BJ (cell line): ENCODE measurements at regions of chr11 and their contacts with region 1.

Region 1: DNA sequence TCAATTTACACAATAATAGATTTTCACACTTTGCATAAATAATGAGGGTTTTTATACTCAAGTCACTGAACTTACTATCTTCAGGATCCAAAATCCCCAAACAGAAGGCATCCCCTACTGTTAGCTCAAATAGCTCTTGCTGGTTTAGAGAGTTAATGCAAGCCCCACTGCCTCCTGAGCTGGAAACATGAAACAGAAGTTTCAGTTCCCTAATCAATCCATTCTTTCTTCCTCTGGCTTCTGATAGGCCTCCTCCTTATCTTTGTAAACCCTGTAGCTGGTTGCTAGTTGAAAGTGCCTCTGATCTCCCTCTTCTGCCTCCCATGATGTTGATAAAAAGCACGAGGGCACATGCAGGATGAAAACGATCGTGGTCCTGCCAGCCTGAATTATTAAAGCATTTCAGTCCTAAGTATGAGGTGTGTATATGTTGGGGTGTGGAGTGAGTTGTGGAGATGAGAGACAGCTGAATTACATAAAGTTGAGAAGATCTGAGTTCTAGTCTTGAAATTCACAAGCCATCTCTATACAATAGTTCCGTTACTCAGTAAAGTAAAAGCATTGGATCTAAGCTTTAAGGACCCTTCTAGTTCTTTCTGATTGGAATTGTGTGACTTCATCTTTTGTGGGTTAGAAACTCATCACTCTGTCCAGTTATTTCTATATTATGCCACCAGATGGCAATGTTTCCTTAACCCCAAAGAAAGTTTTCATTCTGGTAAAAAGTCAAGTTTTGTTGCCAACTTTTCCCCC is 35.0 kb upstream of the EHF start:
- DNase-seq: no peak
- H3K4me3 ChIP-seq: no peak overlapping the region
- H3K27me3 ChIP-seq: peaks cover 3% of the 10 kb centered on the region
- CTCF ChIP-seq: peak; percentile 56

Region 2: GRCh38 chr11:34552270-34552669 is 33.6 kb before region 1 on chr11:
- CTCF ChIA-PET with region 1: no interaction called
- POLR2A ChIA-PET with region 1: no interaction called
- DNase-seq: no peak
- H3K4me3 ChIP-seq: no peak overlapping the region
- H3K27me3 ChIP-seq: peaks cover 10% of the 10 kb centered on the region
- CTCF ChIP-seq: no peak

Region 3: DNA sequence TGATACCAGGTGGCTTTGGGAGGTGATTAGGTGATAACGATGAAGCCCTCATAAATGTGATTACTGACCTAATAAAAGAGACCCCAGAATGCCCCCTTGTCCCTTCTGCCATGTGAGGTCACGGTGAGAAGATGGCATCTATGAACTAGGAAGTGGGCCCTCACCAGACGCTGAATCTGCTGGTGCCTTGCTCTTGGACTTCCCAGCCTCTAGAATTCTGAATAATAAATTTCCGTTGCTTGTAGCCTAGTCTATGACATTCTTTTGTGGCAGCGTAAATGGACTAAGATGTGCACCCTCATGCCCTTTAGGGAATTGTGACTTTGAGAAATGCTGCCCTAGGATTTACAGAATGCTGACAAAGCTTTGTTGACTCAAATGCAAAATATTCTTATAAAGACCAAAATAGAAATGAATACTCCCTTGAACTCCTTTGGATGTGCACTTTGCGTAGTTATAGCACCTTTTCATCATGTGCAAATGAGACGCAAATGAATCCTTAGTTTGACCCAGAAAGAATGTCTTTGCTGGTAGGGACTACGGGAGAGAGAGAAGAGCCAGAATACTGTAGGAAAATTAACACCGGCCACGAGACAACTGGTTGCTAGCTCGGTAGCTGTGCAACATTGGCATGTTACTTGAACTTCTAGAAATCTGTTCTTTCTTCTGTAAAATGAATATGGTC is 10.2 kb after region 1 on chr11:
- CTCF ChIA-PET with region 1: interaction called, 14 read pairs
- POLR2A ChIA-PET with region 1: no interaction called
- DNase-seq: no peak
- H3K4me3 ChIP-seq: no peak overlapping the region
- H3K27me3 ChIP-seq: no peaks in the 10 kb centered on the region
- CTCF ChIP-seq: no peak

Region 4: GRCh38 chr11:34653826-34654490 is 68.0 kb after region 1 on chr11:
- CTCF ChIA-PET with region 1: interaction called, 16 read pairs
- POLR2A ChIA-PET with region 1: no interaction called
- DNase-seq: peak; percentile 92
- H3K4me3 ChIP-seq: no peak overlapping the region
- H3K27me3 ChIP-seq: no peaks in the 10 kb centered on the region
- CTCF ChIP-seq: peak; percentile 32

Region 5: GRCh38 chr11:34881900-34882299 is 296.0 kb after region 1 on chr11:
- CTCF ChIA-PET with region 1: interaction called, 27 read pairs
- POLR2A ChIA-PET with region 1: no interaction called
- DNase-seq: no peak
- H3K4me3 ChIP-seq: no peak overlapping the region
- H3K27me3 ChIP-seq: no peaks in the 10 kb centered on the region
- CTCF ChIP-seq: no peak

Region 6: GRCh38 chr11:34890812-34891211 is 304.9 kb after region 1 on chr11:
- CTCF ChIA-PET with region 1: interaction called, 57 read pairs
- POLR2A ChIA-PET with region 1: no interaction called
- DNase-seq: no peak
- H3K4me3 ChIP-seq: no peak overlapping the region
- H3K27me3 ChIP-seq: no peaks in the 10 kb centered on the region
- CTCF ChIP-seq: peak; percentile 40

Region 7: GRCh38 chr11:35134403-35135148 is 548.7 kb after region 1 on chr11:
- CTCF ChIA-PET with region 1: no interaction called
- POLR2A ChIA-PET with region 1: no interaction called
- DNase-seq: peak; percentile 57
- H3K4me3 ChIP-seq: no peak overlapping the region
- H3K27me3 ChIP-seq: no peaks in the 10 kb centered on the region
- CTCF ChIP-seq: no peak